Body of pancreas (tissue), 4 donors: ENCODE measurements at regions of chr18 and their contacts with region 1.

Region 1: DNA sequence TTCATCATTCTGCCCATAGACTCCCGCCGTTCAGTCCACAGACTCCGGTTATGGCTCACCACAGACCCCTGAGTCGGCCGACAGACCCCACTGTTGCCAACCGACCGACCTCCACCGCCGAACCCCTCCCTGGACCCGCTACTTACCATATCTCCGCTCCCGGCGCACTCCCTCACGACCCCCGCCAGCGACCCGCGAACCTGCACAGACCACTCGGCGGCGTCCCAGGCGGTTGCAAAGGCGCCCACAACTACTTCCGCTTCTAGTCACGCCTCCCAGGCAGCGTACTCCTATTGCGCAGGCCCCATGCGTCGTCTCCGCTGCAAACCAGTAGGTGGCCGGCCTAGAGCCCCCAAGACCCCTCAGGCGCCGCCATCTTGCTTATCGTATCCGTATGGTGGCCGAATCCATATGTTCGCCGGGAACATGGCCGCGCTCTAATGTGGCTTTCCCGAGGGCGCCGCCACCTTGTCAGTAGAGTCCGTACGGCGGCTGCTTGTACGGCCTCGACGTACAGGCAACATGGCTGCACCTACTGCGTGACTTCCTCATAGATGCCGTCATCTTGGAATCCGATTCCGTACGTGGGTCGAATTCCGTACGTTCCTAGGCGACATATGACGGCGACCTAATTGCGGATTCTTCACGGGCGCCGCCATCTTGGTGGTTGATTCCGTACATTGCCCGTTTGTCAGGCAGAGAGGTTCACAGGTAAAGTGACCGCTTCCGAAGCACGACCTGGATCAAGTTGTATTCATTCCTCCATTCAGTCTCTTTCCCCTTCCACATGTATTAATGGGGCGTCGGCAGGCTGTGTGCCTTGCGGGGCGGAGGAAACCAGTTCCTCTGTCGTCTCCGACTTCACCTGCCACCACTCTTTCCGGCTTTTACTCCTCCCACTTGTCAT is at the start of gene CXXC1:
- DNase-seq: peak; percentile 94 to 99 (median 98)
- ATAC-seq: peak; percentile 96
- H3K4me3 ChIP-seq: peak within 1 kb of the TSS; percentile 82 to 92
- H3K27ac ChIP-seq: peak within 1 kb of the TSS; percentile 86 to 96 (median 94)
- H3K4me1 ChIP-seq: peaks cover 12% of the 10 kb centered on the region
- H3K27me3 ChIP-seq: no peaks in the 10 kb centered on the region
- CTCF ChIP-seq: peak in 4 of 7 experiments; percentile 74 to 83 (median 78)
- POLR2A ChIP-seq: peak in 2 of 3 donors; percentile 67 to 70
- total RNA-seq, gene CXXC1: 80.7 to 109 TPM

Region 2: GRCh38 chr18:50356036-50356945 is 68.6 kb after region 1 on chr18:
- intact Hi-C with region 1: loop called (anchors 10 kb)
- DNase-seq: peak in 1 of 4 donors; percentile 32
- ATAC-seq: peak; percentile 56
- H3K4me3 ChIP-seq: no peak overlapping the region
- H3K27ac ChIP-seq: no peak overlapping the region
- H3K4me1 ChIP-seq: peaks cover 13% of the 10 kb centered on the region
- H3K27me3 ChIP-seq: no peaks in the 10 kb centered on the region
- CTCF ChIP-seq: no peak
- POLR2A ChIP-seq: no peak

Region 3: GRCh38 chr18:50377061-50377798 is 89.5 kb after region 1 on chr18:
- intact Hi-C with region 1: no loop called
- DNase-seq: no peak
- ATAC-seq: no peak
- H3K4me3 ChIP-seq: no peak overlapping the region
- H3K27ac ChIP-seq: no peak overlapping the region
- H3K4me1 ChIP-seq: peaks cover 23% of the 10 kb centered on the region
- H3K27me3 ChIP-seq: no peaks in the 10 kb centered on the region
- CTCF ChIP-seq: no peak
- POLR2A ChIP-seq: no peak